ENCODE measurements at regions of chr2 and their contacts with region 1.

Region 1: GRCh38 chr2:111698743-111699554 is 185.0 kb downstream of the ANAPC1 start:
- DNase-seq: peak; percentile 79 to 90
- ATAC-seq: peak; percentile 86 to 87
- H3K4me3 ChIP-seq: peak overlapping the region in 2 of 4 donors; percentile 10 to 35
- H3K27ac ChIP-seq: peak overlapping the region; percentile 39 to 73 (median 70)
- H3K4me1 ChIP-seq: peaks cover 24 to 27% of the 10 kb centered on the region in 2 donors
- H3K27me3 ChIP-seq: no peaks in the 10 kb centered on the region
- CTCF ChIP-seq: peak in 1 of 5 experiments; percentile 32
- POLR2A ChIP-seq: peak in 1 of 2 donors; percentile 23

Region 2: DNA sequence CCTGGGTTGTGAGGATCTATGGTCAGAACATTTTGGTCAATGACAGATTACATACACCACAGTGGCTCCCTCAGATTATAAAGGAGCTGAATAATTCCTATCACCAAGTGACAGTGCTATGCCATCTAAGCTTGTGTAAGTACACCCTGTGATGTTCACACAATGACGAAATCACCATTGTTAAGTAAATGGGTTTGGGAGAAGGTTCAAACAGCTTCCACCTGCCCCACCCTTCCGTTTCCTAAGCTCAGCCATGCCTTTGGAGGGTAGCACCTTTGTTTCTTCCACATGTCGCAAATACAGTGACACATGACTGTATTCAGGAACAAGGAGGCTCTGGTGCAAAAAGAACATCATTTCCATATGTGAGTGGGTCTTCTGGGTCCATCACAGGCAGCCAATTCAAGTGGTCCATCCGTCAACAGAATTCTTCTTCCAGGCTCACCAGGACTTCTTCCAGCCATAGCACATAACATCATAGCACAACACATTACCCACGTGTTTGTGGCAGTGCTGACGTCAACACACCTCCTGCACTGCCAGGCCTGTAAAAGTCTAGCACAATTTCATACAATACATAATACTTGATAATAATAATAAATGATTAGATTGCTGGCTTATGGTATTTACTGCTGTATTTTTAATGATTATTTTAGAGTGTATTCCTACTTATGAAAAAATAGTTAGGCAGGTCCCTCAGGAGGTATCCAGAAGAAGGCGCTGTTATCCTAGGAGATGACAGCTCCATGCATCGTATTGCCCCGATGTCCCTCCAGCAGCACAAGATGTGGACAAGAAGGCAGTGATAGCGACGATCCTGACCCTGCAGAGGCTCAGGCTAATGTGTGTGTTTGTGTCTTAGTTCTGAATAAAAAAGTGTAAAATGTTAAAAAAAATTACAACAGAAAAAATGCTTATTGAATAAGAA is 79.7 kb before region 1 on chr2:
- in situ Hi-C with region 1: loop called in 2 of 4 experiments (anchors 10 kb)
- intact Hi-C with region 1: loop called (anchors 1 kb)
- DNase-seq: no peak
- ATAC-seq: no peak
- H3K4me3 ChIP-seq: no peak overlapping the region
- H3K27ac ChIP-seq: peak overlapping the region in 1 of 4 donors; percentile 25
- H3K4me1 ChIP-seq: peaks cover 11 to 41% of the 10 kb centered on the region in 2 donors
- H3K27me3 ChIP-seq: no peaks in the 10 kb centered on the region
- CTCF ChIP-seq: peak in 1 of 5 experiments; percentile 21
- POLR2A ChIP-seq: no peak

Region 3: GRCh38 chr2:111624401-111625156 is 74.4 kb before region 1 on chr2:
- in situ Hi-C with region 1: loop called in 2 of 4 experiments (anchors 10 kb)
- intact Hi-C with region 1: loop called (anchors 1 kb)
- DNase-seq: no peak
- ATAC-seq: peak; percentile 95 to 99
- H3K4me3 ChIP-seq: no peak overlapping the region
- H3K27ac ChIP-seq: peak overlapping the region; percentile 42 to 78 (median 56)
- H3K4me1 ChIP-seq: peaks cover 22 to 42% of the 10 kb centered on the region in 2 donors
- H3K27me3 ChIP-seq: no peaks in the 10 kb centered on the region
- CTCF ChIP-seq: no peak
- POLR2A ChIP-seq: no peak

Region 4: DNA sequence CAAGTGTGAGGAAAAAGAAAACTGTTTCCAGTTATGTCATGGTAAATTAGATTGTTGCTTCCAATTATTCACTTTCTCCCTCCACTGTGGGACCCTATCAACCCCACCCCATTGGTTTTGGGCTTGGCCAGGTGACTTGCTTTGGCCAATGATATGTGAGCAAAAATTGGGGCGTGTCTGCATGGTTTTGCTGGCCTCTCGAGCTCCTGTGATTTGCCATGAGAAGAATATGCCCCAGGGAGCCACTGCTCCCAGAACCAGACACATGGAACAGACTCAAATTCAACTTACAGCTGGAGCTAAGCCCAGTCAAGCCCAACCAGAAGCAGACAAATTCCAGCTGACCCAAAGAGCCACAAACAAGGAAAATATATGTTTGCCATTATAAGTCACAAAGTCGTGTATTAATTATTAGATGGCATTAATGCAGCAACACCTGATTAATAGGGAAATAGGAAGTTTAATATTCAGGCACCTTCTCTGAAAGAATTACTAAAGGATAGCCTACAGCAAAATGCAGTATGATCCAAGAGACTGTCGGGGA is 63.9 kb before region 1 on chr2:
- in situ Hi-C with region 1: no loop called
- intact Hi-C with region 1: loop called (anchors 5 kb)
- DNase-seq: no peak
- ATAC-seq: no peak
- H3K4me3 ChIP-seq: no peak overlapping the region
- H3K27ac ChIP-seq: no peak overlapping the region
- H3K4me1 ChIP-seq: peaks cover 6 to 10% of the 10 kb centered on the region in 2 donors
- H3K27me3 ChIP-seq: no peaks in the 10 kb centered on the region
- CTCF ChIP-seq: no peak
- POLR2A ChIP-seq: no peak

Region 5: GRCh38 chr2:111671426-111672150 is 27.4 kb before region 1 on chr2:
- in situ Hi-C with region 1: no loop called
- intact Hi-C with region 1: no loop called
- DNase-seq: peak; percentile 18 to 33
- ATAC-seq: peak in 1 of 2 donors; percentile 29
- H3K4me3 ChIP-seq: no peak overlapping the region
- H3K27ac ChIP-seq: no peak overlapping the region
- H3K4me1 ChIP-seq: peaks cover 11 to 12% of the 10 kb centered on the region in 2 donors
- H3K27me3 ChIP-seq: no peaks in the 10 kb centered on the region
- CTCF ChIP-seq: no peak
- POLR2A ChIP-seq: no peak

Region 6: GRCh38 chr2:112803691-112804521 is 1105.0 kb after region 1 on chr2:
- in situ Hi-C with region 1: no loop called
- intact Hi-C with region 1: no loop called
- DNase-seq: no peak
- ATAC-seq: no peak
- H3K4me3 ChIP-seq: no peak overlapping the region
- H3K27ac ChIP-seq: no peak overlapping the region
- H3K4me1 ChIP-seq: no peaks in the 10 kb centered on the region
- H3K27me3 ChIP-seq: no peaks in the 10 kb centered on the region
- CTCF ChIP-seq: no peak
- POLR2A ChIP-seq: no peak

Measured in gastrocnemius medialis (tissue), 4 donors.